ENCODE measurements at regions of chr4 and their contacts with region 1.

Region 1: DNA sequence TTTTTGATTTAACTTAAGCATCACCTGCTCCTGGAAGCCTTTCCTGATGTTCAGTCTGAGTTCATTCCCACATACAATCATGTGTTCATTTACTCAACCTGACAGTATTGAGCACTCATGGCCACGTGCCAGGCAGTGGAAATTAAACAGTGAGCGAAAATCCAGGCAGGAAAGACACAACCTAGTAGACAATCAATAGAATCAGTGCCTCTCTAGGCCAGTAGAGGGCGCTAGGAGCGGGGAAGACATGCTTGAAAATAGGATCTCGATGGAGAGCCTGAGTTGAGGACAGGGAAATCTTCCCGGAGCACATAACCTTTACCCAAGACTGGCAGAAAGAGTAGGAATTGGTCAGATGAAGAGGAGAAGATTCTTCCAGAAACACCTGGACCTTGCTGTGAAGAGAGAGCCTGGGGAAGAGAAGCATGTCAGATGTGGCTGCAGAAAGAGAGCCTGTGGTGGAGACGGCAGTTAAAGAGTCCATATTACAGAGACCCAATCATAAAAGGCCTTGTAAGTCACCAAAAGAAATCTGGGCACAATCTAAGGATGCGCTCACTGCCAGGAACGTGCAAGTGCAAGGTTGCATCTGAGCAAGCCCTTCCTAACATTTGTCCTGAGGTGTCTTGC is 103.5 kb downstream of the LDB2 start:
- DNase-seq: no peak

Region 2: GRCh38 chr4:16897991-16898827 is 103.3 kb after region 1 on chr4 and contains the start of gene LDB2:
- intact Hi-C with region 1: loop called (anchors 5 kb)
- DNase-seq: peak; percentile 82
- total RNA-seq, gene LDB2: 33.3 TPM

Region 3: GRCh38 chr4:16916719-16917337 is 121.9 kb after region 1 on chr4:
- intact Hi-C with region 1: loop called (anchors 5 kb)
- DNase-seq: no peak

Region 4: DNA sequence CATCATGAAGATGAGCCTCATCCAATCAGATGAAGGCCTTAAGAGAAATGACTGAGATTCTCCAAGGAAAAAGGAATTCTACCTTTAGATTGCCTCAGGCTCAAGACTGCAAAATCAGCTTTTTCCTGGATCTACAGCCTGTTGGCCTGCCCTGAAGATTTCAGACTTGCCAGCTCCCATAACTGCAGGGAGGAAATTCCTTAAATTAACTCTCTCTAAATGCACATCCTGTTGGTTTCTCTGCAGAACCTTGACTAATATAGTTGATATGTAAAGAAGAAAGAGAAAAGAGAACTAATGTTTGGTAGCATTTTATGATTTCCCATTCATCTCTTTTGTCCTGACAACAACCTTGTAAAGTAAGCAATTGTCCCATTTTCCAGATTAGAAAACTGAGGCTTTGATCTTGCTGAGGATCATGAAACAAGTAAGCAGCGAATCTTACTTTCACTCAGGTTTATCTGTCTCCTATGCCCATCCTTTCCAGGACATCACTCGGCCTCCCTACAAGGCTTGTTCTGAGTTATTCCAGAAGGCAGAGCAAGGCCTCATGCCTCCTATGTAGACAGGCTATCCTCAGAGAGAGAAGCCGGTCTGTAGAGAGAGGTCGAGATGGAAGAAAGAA is 218.6 kb after region 1 on chr4:
- intact Hi-C with region 1: no loop called
- DNase-seq: no peak

Measured in cardiac septum (tissue), 1 donor.